Activated CD4-positive, alpha-beta T cell treated with anti-CD3 and anti-CD28 coated beads for 36 hours (primary cell): ENCODE measurements at regions of chr17 and their contacts with region 1.

Region 1: DNA sequence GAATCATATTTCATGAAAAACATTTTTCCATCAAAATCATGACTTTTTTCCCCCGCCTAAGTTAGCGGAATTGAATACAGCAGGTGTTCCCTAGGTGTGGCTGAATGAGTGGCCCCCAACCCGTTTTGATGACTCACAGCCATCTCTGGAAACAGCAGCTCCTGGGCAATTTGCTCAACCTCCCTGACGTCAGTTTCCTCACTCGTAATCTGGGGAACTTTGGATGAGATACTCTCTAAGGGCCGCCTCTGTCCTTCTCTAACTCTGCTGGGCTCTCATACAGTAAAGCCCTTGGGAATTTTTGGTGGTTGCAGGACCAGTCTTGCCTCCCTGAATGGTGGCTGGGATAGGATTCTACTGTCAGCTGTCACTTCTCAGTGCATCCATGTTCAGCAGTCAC is 11.6 kb upstream of the NTN1 start:
- DNase-seq: no peak
- ATAC-seq: no peak
- H3K4me3 Mint-ChIP-seq: no peak overlapping the region
- H3K27ac Mint-ChIP-seq: no peak overlapping the region
- H3K4me1 Mint-ChIP-seq: no peaks in the 10 kb centered on the region
- H3K27me3 Mint-ChIP-seq: peaks cover 48% of the 10 kb centered on the region

Region 2: GRCh38 chr17:9021158-9021991 is 11.6 kb after region 1 on chr17 and contains the start of gene NTN1:
- CTCF ChIA-PET with region 1: interaction called, 11 read pairs
- POLR2A ChIA-PET with region 1: no interaction called
- intact Hi-C with region 1: no loop called
- DNase-seq: peak; percentile 82
- ATAC-seq: peak; percentile 89
- H3K4me3 Mint-ChIP-seq: peak within 1 kb of the TSS; percentile 77
- H3K27ac Mint-ChIP-seq: no peak within 1 kb of the TSS
- H3K4me1 Mint-ChIP-seq: peaks cover 6% of the 10 kb centered on the region
- H3K27me3 Mint-ChIP-seq: peaks cover 48% of the 10 kb centered on the region
- total RNA-seq, gene NTN1: 0.60 to 0.71 TPM